HepG2 (cell line): ENCODE measurements at regions of chr20 and their contacts with region 1.

Region 1: GRCh38 chr20:51966291-51966971 is 164.1 kb upstream of the SALL4 start:
- DNase-seq: peak; percentile 84
- ATAC-seq: peak; percentile 96
- H3K4me3 ChIP-seq: no peak overlapping the region
- H3K27ac ChIP-seq: no peak overlapping the region
- H3K4me1 ChIP-seq: peaks cover 20% of the 10 kb centered on the region
- H3K27me3 ChIP-seq: peaks cover 0 to 6% of the 10 kb centered on the region in 2 experiments; a peak in 1 of 5 replicates
- CTCF ChIP-seq: peak; percentile 88
- EP300 ChIP-seq: no peak
- POLR2A ChIP-seq: no peak
- RAD21 ChIP-seq: peak; percentile 65; the same call in 1 of the 2 replicates

Region 2: GRCh38 chr20:51492167-51493092 is 474.0 kb before region 1 on chr20:
- CTCF ChIA-PET with region 1: no interaction called
- POLR2A ChIA-PET with region 1: no interaction called
- in situ Hi-C with region 1: no loop called
- intact Hi-C with region 1: loop called (anchors 5 kb)
- DNase-seq: no peak
- ATAC-seq: no peak
- H3K4me3 ChIP-seq: no peak overlapping the region
- H3K27ac ChIP-seq: no peak overlapping the region
- H3K4me1 ChIP-seq: no peaks in the 10 kb centered on the region
- H3K27me3 ChIP-seq: no peaks in the 10 kb centered on the region
- CTCF ChIP-seq: no peak
- EP300 ChIP-seq: no peak
- POLR2A ChIP-seq: no peak
- RAD21 ChIP-seq: no peak

Region 3: GRCh38 chr20:51639206-51639832 is 327.1 kb before region 1 on chr20:
- CTCF ChIA-PET with region 1: interaction called, 31 read pairs
- POLR2A ChIA-PET with region 1: no interaction called
- in situ Hi-C with region 1: loop called (anchors 5 kb)
- intact Hi-C with region 1: loop called (anchors 1 kb)
- DNase-seq: peak; percentile 75
- ATAC-seq: peak; percentile 93
- H3K4me3 ChIP-seq: no peak overlapping the region
- H3K27ac ChIP-seq: no peak overlapping the region
- H3K4me1 ChIP-seq: peaks cover 7% of the 10 kb centered on the region; the same call in 1 of the 2 replicates
- H3K27me3 ChIP-seq: no peaks in the 10 kb centered on the region
- CTCF ChIP-seq: peak; percentile 100
- EP300 ChIP-seq: no peak
- POLR2A ChIP-seq: no peak
- RAD21 ChIP-seq: peak; percentile 98

Region 4: GRCh38 chr20:51800060-51800794 is 166.2 kb before region 1 on chr20:
- CTCF ChIA-PET with region 1: interaction called, 5 read pairs
- POLR2A ChIA-PET with region 1: no interaction called
- in situ Hi-C with region 1: no loop called
- intact Hi-C with region 1: loop called (anchors 2 kb)
- DNase-seq: peak; percentile 48
- ATAC-seq: peak; percentile 95
- H3K4me3 ChIP-seq: peak overlapping the region; percentile 55 to 78 (median 60)
- H3K27ac ChIP-seq: no peak overlapping the region
- H3K4me1 ChIP-seq: peaks cover 44% of the 10 kb centered on the region
- H3K27me3 ChIP-seq: peaks cover 2 to 49% of the 10 kb centered on the region in 2 experiments; a peak in 3 of 5 replicates
- CTCF ChIP-seq: peak; percentile 100
- EP300 ChIP-seq: no peak
- POLR2A ChIP-seq: no peak
- RAD21 ChIP-seq: peak; percentile 96